ENCODE measurements at regions of chr22 and their contacts with region 1.

Region 1: GRCh38 chr22:29766632-29767170 is at the start of gene ZMAT5:
- DNase-seq: peak; percentile 88 to 97 (median 96)
- H3K4me3 ChIP-seq: peak within 1 kb of the TSS; percentile 69 to 100 (median 96)
- H3K27ac ChIP-seq: peak within 1 kb of the TSS; percentile 76 to 99 (median 96)
- H3K27me3 ChIP-seq: no peaks in the 10 kb centered on the region
- CTCF ChIP-seq: peak in 19 of 56 donors; percentile 6 to 52 (median 26)
- total RNA-seq, gene ZMAT5: 13.5 to 32.9 (median 20.5) TPM

Region 2: GRCh38 chr22:29553351-29554224 is 213.1 kb before region 1 on chr22 and contains the start of gene THOC5:
- intact Hi-C with region 1: loop called in 1 of 2 experiments (anchors 5 kb)
- DNase-seq: peak; percentile 88 to 98 (median 96)
- H3K4me3 ChIP-seq: peak within 1 kb of the TSS; percentile 68 to 95 (median 86)
- H3K27ac ChIP-seq: peak within 1 kb of the TSS; percentile 42 to 98 (median 92)
- H3K27me3 ChIP-seq: no peaks in the 10 kb centered on the region
- CTCF ChIP-seq: peak; percentile 61 to 94 (median 87)
- total RNA-seq, gene THOC5: 37.2 to 74.1 (median 51.8) TPM

Region 3: DNA sequence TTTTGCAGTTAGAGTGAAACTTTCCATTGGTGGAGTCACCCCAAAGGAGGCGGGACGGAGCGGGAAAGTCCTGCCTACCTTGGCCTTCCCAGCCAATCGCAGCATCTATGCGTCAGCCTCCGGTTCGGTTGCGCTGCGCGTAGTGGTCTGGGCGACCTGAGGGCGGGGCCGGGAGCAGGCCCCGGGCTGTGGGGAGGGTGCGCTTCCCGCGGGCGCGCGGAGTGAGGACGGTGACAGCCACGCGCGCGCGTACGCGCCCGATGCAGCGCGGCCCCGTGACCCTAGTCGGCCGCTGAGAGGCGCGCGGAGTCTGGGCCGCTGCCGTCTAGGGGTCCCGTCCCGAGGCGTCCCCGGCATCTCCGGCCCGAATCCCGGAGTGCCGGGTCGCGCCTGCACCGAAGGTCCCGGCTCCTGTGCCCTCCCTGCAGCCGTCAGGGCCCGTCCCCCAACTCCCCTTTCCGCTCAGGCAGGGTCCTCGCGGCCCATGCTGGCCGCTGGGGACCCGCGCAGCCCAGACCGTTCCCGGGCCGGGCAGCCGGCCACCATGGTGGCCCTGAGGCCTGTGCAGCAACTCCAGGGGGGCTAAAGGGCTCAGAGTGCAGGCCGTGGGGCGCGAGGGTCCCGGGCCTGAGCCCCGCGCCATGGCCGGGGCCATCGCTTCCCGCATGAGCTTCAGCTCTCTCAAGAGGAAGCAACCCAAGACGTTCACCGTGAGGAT is 163.2 kb before region 1 on chr22 and contains the start of gene NF2:
- intact Hi-C with region 1: loop called in 1 of 2 experiments (anchors 5 kb)
- DNase-seq: peak; percentile 98 to 100 (median 100)
- H3K4me3 ChIP-seq: peak within 1 kb of the TSS; percentile 58 to 100 (median 96)
- H3K27ac ChIP-seq: peak within 1 kb of the TSS in 58 of 59 donors; percentile 58 to 98 (median 88)
- H3K27me3 ChIP-seq: no peaks in the 10 kb centered on the region
- CTCF ChIP-seq: peak in 32 of 56 donors; percentile 11 to 60 (median 30)
- total RNA-seq, gene NF2: 34.6 to 110 (median 73.5) TPM

Region 4: DNA sequence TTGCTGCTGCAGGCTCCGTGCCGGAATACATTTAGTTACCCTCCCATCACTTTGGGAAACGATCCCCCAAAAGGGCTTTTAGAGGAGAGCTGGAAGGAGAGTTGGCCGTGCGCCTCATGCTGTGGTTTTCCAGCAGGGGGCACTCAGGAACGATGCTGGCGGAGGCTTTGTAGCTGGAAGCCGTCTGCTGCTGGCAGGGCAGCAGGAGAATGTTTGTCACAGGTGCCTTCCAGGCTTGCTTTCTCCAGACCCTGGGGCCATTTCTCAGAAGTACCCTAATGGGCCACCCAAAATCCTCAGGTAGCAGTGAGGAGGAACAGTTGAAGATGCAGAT is 76.9 kb before region 1 on chr22:
- intact Hi-C with region 1: loop called (anchors 5 to 10 kb)
- DNase-seq: peak; percentile 64 to 87 (median 79)
- H3K4me3 ChIP-seq: no peak overlapping the region
- H3K27ac ChIP-seq: peak overlapping the region in 31 of 59 donors; percentile 4 to 65 (median 36)
- H3K27me3 ChIP-seq: no peaks in the 10 kb centered on the region
- CTCF ChIP-seq: peak; percentile 61 to 92 (median 86)

Region 5: GRCh38 chr22:29837780-29838598 is 71.3 kb after region 1 on chr22 and contains the start of gene ASCC2:
- intact Hi-C with region 1: loop called in 1 of 2 experiments (anchors 5 kb)
- DNase-seq: peak; percentile 94 to 99 (median 97)
- H3K4me3 ChIP-seq: peak within 1 kb of the TSS; percentile 65 to 100 (median 94)
- H3K27ac ChIP-seq: peak within 1 kb of the TSS in 55 of 59 donors; percentile 2 to 90 (median 74)
- H3K27me3 ChIP-seq: no peaks in the 10 kb centered on the region
- CTCF ChIP-seq: peak in 36 of 56 donors; percentile 5 to 56 (median 29)
- total RNA-seq, gene ASCC2: 22.5 to 65.4 (median 35.4) TPM

Region 6: GRCh38 chr22:29883045-29883774 is 116.5 kb after region 1 on chr22 and contains the start of gene MTMR3:
- intact Hi-C with region 1: loop called in 1 of 2 experiments (anchors 5 kb)
- DNase-seq: peak; percentile 85 to 96 (median 92)
- H3K4me3 ChIP-seq: peak within 1 kb of the TSS; percentile 72 to 100 (median 93)
- H3K27ac ChIP-seq: peak within 1 kb of the TSS; percentile 73 to 99 (median 96)
- H3K27me3 ChIP-seq: no peaks in the 10 kb centered on the region
- CTCF ChIP-seq: peak in 51 of 56 donors; percentile 17 to 73 (median 47)
- total RNA-seq, gene MTMR3: 45.6 to 93.4 (median 62.5) TPM

Region 7: GRCh38 chr22:30015846-30016245 is 249.1 kb after region 1 on chr22:
- intact Hi-C with region 1: loop called in 1 of 2 experiments (anchors 5 kb)
- DNase-seq: no peak
- H3K4me3 ChIP-seq: no peak overlapping the region
- H3K27ac ChIP-seq: no peak overlapping the region
- H3K27me3 ChIP-seq: no peaks in the 10 kb centered on the region
- CTCF ChIP-seq: no peak